SK-N-SH (cell line): ENCODE measurements at regions of chr1 and their contacts with region 1.

Region 1: DNA sequence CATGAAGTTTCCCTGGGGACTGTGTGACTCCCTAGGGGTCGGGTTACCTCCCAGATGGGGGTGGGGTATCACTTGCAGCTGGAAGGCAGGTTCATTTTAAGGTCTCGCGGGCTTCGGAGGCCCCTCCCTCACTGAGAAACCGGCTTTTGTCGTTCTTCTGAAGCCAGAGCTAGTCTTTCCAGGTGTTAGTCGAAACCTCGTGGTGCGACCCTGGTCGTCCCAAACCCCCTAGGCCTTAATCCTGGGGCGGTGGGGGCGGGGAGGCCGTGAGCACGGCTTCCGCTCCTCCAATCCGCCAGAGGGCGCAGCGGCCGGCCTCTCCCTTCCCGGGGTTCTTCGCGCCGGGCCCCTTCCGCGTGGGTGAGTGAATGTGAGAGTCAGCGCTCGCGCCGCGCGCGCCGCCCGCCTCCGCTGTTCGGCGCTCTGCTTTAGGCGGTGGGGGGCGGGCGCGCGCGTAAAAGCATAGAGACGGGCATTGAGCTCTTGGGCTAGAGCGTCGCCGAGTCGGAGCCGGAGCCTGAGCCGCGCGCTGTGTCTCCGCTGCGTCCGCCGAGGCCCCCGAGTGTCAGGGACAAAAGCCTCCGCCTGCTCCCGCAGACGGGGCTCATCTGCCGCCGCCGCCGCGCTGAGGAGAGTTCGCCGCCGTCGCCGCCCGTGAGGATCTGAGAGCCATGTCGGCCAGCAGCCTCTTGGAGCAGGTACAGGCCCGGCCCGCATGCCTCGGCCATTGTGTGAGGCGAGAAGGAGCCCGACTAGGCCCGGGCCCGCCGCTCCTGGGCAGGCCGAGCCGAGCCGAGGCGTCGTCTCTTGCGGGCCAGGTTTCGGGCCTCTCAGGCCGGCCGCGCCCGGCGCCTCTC is at the start of gene YTHDF2:
- DNase-seq: peak; percentile 95
- H3K4me3 ChIP-seq: peak within 1 kb of the TSS; percentile 77 to 97
- H3K27ac ChIP-seq: peak within 1 kb of the TSS; percentile 88
- H3K4me1 ChIP-seq: peaks cover 14 to 17% of the 10 kb centered on the region in 2 experiments; a peak in 3 of 4 replicates
- H3K27me3 ChIP-seq: no peaks in the 10 kb centered on the region
- CTCF ChIP-seq: peak; percentile 88
- EP300 ChIP-seq: peak; percentile 24 to 47; a peak in 2 of 4 replicates
- RAD21 ChIP-seq: peak; percentile 11; the same call in 1 of the 2 replicates
- polyA plus RNA-seq, gene YTHDF2: 45.2 and 54.8 TPM in 2 replicates

Region 2: DNA sequence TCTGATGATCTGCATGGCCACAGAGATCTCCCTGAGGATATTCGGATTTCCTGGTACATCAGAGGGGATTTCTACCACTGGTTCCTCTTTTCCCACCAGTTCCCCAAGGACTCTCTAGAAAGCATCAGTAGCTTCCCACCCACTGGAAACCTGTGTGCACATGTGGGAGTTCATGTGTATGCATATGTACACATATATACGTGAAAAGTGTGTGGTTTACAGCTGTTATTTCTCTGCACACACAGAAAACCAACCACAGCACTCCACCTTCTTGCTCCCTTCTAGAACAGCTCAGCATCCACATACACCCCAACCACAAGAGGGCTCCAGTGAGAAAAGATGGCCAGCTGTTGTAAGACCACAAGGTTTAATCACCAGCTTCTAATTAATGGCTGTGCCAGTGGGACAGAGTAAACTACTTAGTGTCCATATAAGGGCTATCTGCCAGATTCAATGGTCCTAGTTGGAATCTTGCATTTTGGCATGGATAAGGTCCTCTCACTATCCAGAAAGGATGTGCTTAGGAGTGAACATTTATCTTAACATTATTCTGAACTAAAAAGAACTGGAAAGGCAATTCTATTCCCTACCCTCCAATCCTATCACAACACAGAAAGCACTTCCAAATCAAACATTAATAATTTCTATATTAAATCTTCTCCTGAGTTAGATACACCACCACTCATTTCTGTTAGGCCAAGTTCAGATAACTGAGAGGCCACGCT is 1320.1 kb before region 1 on chr1:
- CTCF ChIA-PET with region 1: no interaction called
- POLR2A ChIA-PET with region 1: no interaction called
- DNase-seq: peak; percentile 45
- H3K4me3 ChIP-seq: no peak overlapping the region
- H3K27ac ChIP-seq: no peak overlapping the region
- H3K4me1 ChIP-seq: peaks cover 0 to 14% of the 10 kb centered on the region in 2 experiments; a peak in 1 of 4 replicates
- H3K27me3 ChIP-seq: no peaks in the 10 kb centered on the region
- CTCF ChIP-seq: peak; percentile 58
- EP300 ChIP-seq: no peak
- RAD21 ChIP-seq: peak; percentile 56

Region 3: GRCh38 chr1:28648474-28649198 is 88.0 kb before region 1 on chr1 and contains the start of gene RNU11:
- CTCF ChIA-PET with region 1: interaction called, 8 read pairs
- POLR2A ChIA-PET with region 1: interaction called, 28 read pairs
- DNase-seq: peak; percentile 73
- H3K4me3 ChIP-seq: peak within 1 kb of the TSS; percentile 39 to 40
- H3K27ac ChIP-seq: peak within 1 kb of the TSS; percentile 96 to 99
- H3K4me1 ChIP-seq: peaks cover 0 to 9% of the 10 kb centered on the region in 2 experiments; a peak in 2 of 4 replicates
- H3K27me3 ChIP-seq: no peaks in the 10 kb centered on the region
- CTCF ChIP-seq: no peak
- EP300 ChIP-seq: peak; percentile 15 to 80; a peak in 1 of 4 replicates
- RAD21 ChIP-seq: no peak; the same call in 1 of the 2 replicates
- polyA plus RNA-seq, gene RNU11: not detected in 2 replicates

Region 4: GRCh38 chr1:28668191-28668955 is 68.3 kb before region 1 on chr1 and contains the start of gene GMEB1:
- CTCF ChIA-PET with region 1: interaction called, 17 read pairs
- POLR2A ChIA-PET with region 1: interaction called, 13 read pairs
- DNase-seq: peak; percentile 99
- H3K4me3 ChIP-seq: peak within 1 kb of the TSS; percentile 67 to 83
- H3K27ac ChIP-seq: peak within 1 kb of the TSS; percentile 92 to 94
- H3K4me1 ChIP-seq: peaks cover 5% of the 10 kb centered on the region in 2 experiments; a peak in 1 of 4 replicates
- H3K27me3 ChIP-seq: no peaks in the 10 kb centered on the region
- CTCF ChIP-seq: no peak
- EP300 ChIP-seq: no peak
- RAD21 ChIP-seq: no peak
- polyA plus RNA-seq, gene GMEB1: 3.6 TPM in 2 replicates

Region 5: DNA sequence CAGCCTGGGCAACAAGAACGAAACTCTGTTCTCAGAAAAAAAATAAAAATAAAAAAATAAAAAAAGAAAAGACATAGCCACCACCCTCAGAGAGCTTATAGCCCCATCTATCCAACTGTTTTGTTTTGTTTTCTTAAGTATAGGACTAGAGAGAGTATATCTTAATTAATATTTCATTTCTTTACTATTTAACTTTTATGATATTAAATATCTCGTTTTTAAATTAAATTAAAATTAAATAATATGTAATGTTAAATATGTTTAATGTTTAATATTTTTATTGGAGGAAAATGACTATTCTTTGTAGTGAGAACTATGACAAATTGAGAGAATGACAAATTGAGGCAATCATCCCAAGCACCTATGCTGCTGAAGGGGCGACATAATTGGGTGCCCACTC is 33.0 kb before region 1 on chr1:
- CTCF ChIA-PET with region 1: interaction called, 11 read pairs
- POLR2A ChIA-PET with region 1: no interaction called
- DNase-seq: no peak
- H3K4me3 ChIP-seq: no peak overlapping the region
- H3K27ac ChIP-seq: no peak overlapping the region
- H3K4me1 ChIP-seq: no peaks in the 10 kb centered on the region
- H3K27me3 ChIP-seq: no peaks in the 10 kb centered on the region
- CTCF ChIP-seq: no peak
- EP300 ChIP-seq: no peak
- RAD21 ChIP-seq: no peak

Region 6: DNA sequence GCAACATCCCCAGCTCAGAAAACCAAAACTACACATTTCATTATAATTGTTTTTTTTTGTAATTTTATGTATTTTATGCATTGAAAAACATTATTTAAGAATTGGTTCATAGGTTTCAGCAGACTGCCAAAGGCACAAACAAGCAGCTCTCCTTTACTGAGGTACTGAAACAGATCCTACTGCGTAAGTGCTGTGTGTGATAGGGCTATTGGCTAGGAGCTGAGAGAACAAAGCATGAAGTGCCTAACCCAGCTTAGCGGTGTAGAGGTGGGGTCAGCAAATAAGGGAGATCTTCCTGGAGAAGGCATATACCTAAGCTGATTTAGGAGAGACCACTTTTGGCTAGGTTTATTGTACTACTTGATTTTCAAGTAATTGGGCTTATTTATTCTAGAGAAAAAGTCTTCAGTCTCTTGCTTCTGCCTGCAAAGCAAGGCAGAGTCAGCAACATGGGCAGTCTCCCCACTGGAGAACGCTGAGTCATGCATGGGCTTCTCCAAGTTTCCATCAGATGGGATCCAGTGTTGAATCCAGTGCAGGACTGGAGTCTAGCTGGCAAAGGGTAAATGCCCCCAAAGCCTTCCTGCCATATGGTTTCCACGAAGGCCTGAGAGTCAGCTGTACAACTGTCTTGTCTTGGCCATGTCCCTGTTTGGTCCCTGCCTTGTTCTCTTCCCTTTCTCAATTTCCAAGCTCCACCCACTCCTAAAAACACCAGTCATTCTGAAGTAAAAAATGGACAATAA is 17.9 kb before region 1 on chr1:
- CTCF ChIA-PET with region 1: interaction called, 47 read pairs
- POLR2A ChIA-PET with region 1: no interaction called
- DNase-seq: no peak
- H3K4me3 ChIP-seq: no peak overlapping the region
- H3K27ac ChIP-seq: no peak overlapping the region
- H3K4me1 ChIP-seq: peaks cover 3 to 6% of the 10 kb centered on the region in 2 experiments; a peak in 3 of 4 replicates
- H3K27me3 ChIP-seq: no peaks in the 10 kb centered on the region
- CTCF ChIP-seq: no peak
- EP300 ChIP-seq: no peak
- RAD21 ChIP-seq: no peak

Region 7: GRCh38 chr1:28751315-28752060 is 14.8 kb after region 1 on chr1:
- CTCF ChIA-PET with region 1: interaction called, 20 read pairs
- POLR2A ChIA-PET with region 1: interaction called, 3 read pairs
- DNase-seq: no peak
- H3K4me3 ChIP-seq: no peak overlapping the region
- H3K27ac ChIP-seq: peak overlapping the region in 1 of 2 experiments; percentile 51; a peak in 2 of 4 replicates
- H3K4me1 ChIP-seq: peaks cover 2 to 30% of the 10 kb centered on the region in 2 experiments; a peak in 3 of 4 replicates
- H3K27me3 ChIP-seq: no peaks in the 10 kb centered on the region
- CTCF ChIP-seq: no peak
- EP300 ChIP-seq: no peak
- RAD21 ChIP-seq: no peak

Region 8: DNA sequence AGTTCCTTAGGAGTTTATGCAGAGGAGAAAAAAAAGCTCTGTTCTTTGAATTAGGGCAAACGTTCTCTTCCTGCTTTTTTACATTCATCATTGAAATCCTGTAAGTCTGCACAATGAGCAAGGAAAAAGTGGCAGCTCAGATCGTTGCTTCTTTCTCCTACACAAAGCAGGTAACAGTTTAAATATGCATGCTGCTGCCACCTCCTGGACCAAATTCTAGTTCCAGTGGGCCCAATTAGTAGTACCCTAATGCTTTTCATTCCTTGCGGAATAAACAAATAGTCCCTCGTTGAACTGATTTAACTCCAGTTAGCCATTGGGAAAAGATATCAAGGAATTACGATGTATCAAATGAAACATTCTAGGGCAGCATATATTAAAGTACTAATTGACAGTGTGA is 20.2 kb after region 1 on chr1:
- CTCF ChIA-PET with region 1: interaction called, 20 read pairs
- POLR2A ChIA-PET with region 1: interaction called, 3 read pairs
- DNase-seq: no peak
- H3K4me3 ChIP-seq: no peak overlapping the region
- H3K27ac ChIP-seq: no peak overlapping the region
- H3K4me1 ChIP-seq: peaks cover 4 to 5% of the 10 kb centered on the region in 2 experiments; a peak in 3 of 4 replicates
- H3K27me3 ChIP-seq: no peaks in the 10 kb centered on the region
- CTCF ChIP-seq: peak; percentile 26
- EP300 ChIP-seq: no peak
- RAD21 ChIP-seq: peak; percentile 34; the same call in 1 of the 2 replicates